Mammary epithelial cell (primary cell): ENCODE measurements at regions of chr1 and their contacts with region 1.

Region 1: GRCh38 chr1:41241782-41242341 is at the start of gene SCMH1:
- DNase-seq: peak; percentile 25
- H3K4me3 ChIP-seq: peak within 1 kb of the TSS; percentile 56 to 62 (median 56)
- H3K27ac ChIP-seq: peak within 1 kb of the TSS; percentile 21
- H3K4me1 ChIP-seq: peaks cover 30% of the 10 kb centered on the region
- H3K27me3 ChIP-seq: no peaks in the 10 kb centered on the region
- CTCF ChIP-seq: no peak
- total RNA-seq, gene SCMH1: 19.2 to 32.1 TPM

Region 2: DNA sequence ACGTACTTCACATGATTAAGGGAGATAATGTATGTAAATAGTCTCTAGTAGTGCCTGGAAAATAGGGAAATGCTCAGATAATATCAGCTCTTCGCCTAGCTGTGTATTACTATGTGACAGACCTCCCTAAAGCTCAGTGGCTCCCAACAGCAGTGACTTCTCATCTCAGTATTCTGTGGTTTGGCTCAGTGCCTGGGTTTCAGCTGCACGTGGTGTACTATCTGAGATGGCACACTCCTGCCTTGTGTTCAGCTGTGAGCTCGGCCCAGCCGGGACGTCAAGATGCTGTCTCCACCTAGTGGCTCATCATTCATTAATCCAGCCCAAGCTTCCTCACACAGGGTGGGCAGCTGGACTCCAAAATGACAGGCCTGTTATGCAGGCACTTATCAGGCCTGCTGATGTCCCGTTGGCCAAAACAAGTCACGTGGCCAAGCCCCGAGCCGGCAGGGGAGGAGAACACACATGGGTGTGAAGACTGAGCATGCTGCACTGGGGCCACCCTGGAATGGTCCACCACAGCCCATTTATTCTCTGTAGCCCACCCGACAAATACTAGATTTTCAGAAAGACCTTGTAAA is 238.1 kb before region 1 on chr1:
- CTCF ChIA-PET with region 1: no interaction called
- dilution Hi-C with region 1: no loop called
- in situ Hi-C with region 1: loop called in 1 of 2 experiments (anchors 25 kb)
- intact Hi-C with region 1: no loop called
- DNase-seq: peak; percentile 97
- H3K4me3 ChIP-seq: no peak overlapping the region
- H3K27ac ChIP-seq: peak overlapping the region; percentile 38
- H3K4me1 ChIP-seq: peaks cover 49% of the 10 kb centered on the region
- H3K27me3 ChIP-seq: no peaks in the 10 kb centered on the region
- CTCF ChIP-seq: peak; percentile 57 to 74

Region 3: DNA sequence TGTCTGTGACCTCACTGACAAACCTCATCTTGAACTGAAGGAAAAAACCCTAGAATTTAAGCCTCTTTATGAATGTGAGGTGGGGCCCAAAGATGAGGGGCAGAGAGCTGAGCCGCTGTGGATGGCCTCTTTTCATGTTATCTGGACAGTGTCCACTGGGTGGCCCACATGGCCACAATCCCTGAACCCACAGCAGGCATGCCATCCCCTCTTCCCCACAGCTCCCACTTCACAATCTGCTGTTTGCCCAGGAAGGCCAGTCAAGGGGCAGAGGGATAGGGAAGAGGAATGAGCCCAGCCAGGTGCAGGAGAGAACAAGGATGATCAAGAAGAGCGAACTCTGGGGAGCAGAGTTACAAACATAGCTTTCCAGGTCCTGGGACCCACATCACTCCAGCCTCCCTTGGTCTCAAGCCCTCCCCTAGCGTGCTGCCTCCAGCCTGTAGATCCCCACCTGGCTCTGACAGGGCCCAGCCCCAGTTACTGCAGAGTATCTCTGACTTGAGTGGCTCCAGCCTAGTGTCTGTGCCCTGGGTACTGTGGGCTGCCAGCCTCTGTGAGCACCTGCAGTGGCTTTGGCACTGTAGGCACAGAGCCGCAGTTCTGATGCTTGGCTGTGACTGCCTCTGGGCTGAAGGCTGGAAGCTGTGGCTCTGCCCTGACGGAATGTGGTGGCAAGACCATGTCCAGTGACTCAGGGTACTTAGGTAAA is 218.4 kb before region 1 on chr1:
- CTCF ChIA-PET with region 1: no interaction called
- dilution Hi-C with region 1: no loop called
- in situ Hi-C with region 1: loop called in 1 of 2 experiments (anchors 25 kb)
- intact Hi-C with region 1: loop called (anchors 1 kb)
- DNase-seq: no peak
- H3K4me3 ChIP-seq: no peak overlapping the region
- H3K27ac ChIP-seq: no peak overlapping the region
- H3K4me1 ChIP-seq: no peaks in the 10 kb centered on the region
- H3K27me3 ChIP-seq: no peaks in the 10 kb centered on the region
- CTCF ChIP-seq: peak in 1 of 2 donors; percentile 32

Region 4: GRCh38 chr1:41045740-41046139 is 196.1 kb before region 1 on chr1:
- CTCF ChIA-PET with region 1: no interaction called
- dilution Hi-C with region 1: no loop called
- in situ Hi-C with region 1: no loop called
- intact Hi-C with region 1: loop called (anchors 2 kb)
- DNase-seq: peak; percentile 91
- H3K4me3 ChIP-seq: peak overlapping the region; percentile 12 to 29 (median 15)
- H3K27ac ChIP-seq: peak overlapping the region; percentile 64
- H3K4me1 ChIP-seq: peaks cover 32% of the 10 kb centered on the region
- H3K27me3 ChIP-seq: no peaks in the 10 kb centered on the region
- CTCF ChIP-seq: no peak

Region 5: GRCh38 chr1:41072051-41072450 is 169.8 kb before region 1 on chr1:
- CTCF ChIA-PET with region 1: no interaction called
- dilution Hi-C with region 1: no loop called
- in situ Hi-C with region 1: no loop called
- intact Hi-C with region 1: no loop called
- DNase-seq: no peak
- H3K4me3 ChIP-seq: no peak overlapping the region
- H3K27ac ChIP-seq: no peak overlapping the region
- H3K4me1 ChIP-seq: peaks cover 3% of the 10 kb centered on the region
- H3K27me3 ChIP-seq: no peaks in the 10 kb centered on the region
- CTCF ChIP-seq: no peak

Region 6: GRCh38 chr1:41135196-41135947 is 106.5 kb before region 1 on chr1:
- CTCF ChIA-PET with region 1: no interaction called
- dilution Hi-C with region 1: no loop called
- in situ Hi-C with region 1: loop called in 1 of 2 experiments (anchors 25 kb)
- intact Hi-C with region 1: no loop called
- DNase-seq: peak; percentile 10
- H3K4me3 ChIP-seq: no peak overlapping the region
- H3K27ac ChIP-seq: no peak overlapping the region
- H3K4me1 ChIP-seq: no peaks in the 10 kb centered on the region
- H3K27me3 ChIP-seq: no peaks in the 10 kb centered on the region
- CTCF ChIP-seq: no peak

Region 7: GRCh38 chr1:41152622-41153044 is 89.2 kb before region 1 on chr1:
- CTCF ChIA-PET with region 1: no interaction called
- dilution Hi-C with region 1: no loop called
- in situ Hi-C with region 1: loop called in 1 of 2 experiments (anchors 25 kb)
- intact Hi-C with region 1: loop called (anchors 10 kb)
- DNase-seq: peak; percentile 79
- H3K4me3 ChIP-seq: no peak overlapping the region
- H3K27ac ChIP-seq: peak overlapping the region; percentile 15
- H3K4me1 ChIP-seq: peaks cover 10% of the 10 kb centered on the region
- H3K27me3 ChIP-seq: no peaks in the 10 kb centered on the region
- CTCF ChIP-seq: no peak

Region 8: GRCh38 chr1:41175546-41175945 is 66.3 kb before region 1 on chr1:
- CTCF ChIA-PET with region 1: no interaction called
- dilution Hi-C with region 1: no loop called
- in situ Hi-C with region 1: no loop called
- intact Hi-C with region 1: no loop called
- DNase-seq: peak; percentile 32
- H3K4me3 ChIP-seq: no peak overlapping the region
- H3K27ac ChIP-seq: no peak overlapping the region
- H3K4me1 ChIP-seq: peaks cover 5% of the 10 kb centered on the region
- H3K27me3 ChIP-seq: no peaks in the 10 kb centered on the region
- CTCF ChIP-seq: no peak